Sigmoid colon (tissue), 7 donors: ENCODE measurements at regions of chr9 and their contacts with region 1.

Region 1: DNA sequence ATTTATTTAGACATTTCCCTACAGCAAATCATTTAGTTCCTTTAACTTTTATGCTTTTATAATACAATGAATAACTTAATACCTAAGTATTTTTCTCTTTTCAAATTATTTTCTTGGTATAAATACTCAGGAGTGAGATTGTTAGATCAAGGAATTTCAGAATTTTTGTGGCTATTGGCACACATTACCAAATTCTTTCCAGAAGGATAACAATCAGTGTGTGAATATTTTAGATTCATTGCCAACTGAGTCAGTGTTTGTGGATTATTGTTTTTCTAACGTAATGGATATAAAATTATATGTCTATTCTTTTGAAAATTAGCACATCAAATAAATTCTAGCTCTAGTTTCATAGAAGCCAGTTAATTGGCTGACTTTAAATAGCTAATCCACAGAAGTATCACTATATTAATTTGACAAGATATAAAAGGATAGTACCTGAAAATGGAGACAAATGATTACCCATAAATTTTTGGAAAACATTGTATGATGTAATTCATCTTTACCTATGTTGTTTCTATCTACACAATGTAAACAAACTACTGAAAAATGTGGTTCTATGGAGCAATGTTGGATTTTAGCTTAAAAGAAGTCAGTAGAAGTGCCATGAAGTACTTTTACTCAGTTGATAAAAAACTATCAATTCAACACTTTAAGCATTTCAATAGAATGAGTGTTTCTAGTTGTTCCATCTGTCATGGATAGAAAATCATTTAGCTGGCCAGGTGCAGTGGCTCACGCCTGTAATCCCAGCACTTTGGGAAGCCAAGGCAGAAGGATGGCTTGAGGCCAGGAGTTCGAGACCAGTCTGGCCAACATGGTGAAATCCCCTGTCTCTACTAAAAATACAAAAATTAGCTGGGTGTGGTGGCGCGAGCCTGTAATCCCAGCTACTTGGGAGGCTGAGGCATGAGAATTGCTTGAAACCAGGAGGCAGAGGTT is 185.1 kb downstream of the ADAMTSL1 start:
- DNase-seq: no peak
- H3K4me3 ChIP-seq: no peak overlapping the region
- H3K27ac ChIP-seq: no peak overlapping the region
- H3K4me1 ChIP-seq: no peaks in the 10 kb centered on the region
- H3K27me3 ChIP-seq: no peaks in the 10 kb centered on the region
- CTCF ChIP-seq: no peak
- EP300 ChIP-seq: no peak
- POLR2A ChIP-seq: no peak

Region 2: GRCh38 chr9:18768951-18769622 is 110.1 kb after region 1 on chr9:
- intact Hi-C with region 1: no loop called
- DNase-seq: no peak
- H3K4me3 ChIP-seq: no peak overlapping the region
- H3K27ac ChIP-seq: no peak overlapping the region
- H3K4me1 ChIP-seq: peaks cover 0 to 33% (median 27%) of the 10 kb centered on the region in 4 donors
- H3K27me3 ChIP-seq: no peaks in the 10 kb centered on the region
- CTCF ChIP-seq: no peak
- EP300 ChIP-seq: no peak
- POLR2A ChIP-seq: no peak

Region 3: GRCh38 chr9:18834740-18835361 is 175.8 kb after region 1 on chr9:
- intact Hi-C with region 1: loop called (anchors 10 kb)
- DNase-seq: no peak
- H3K4me3 ChIP-seq: no peak overlapping the region
- H3K27ac ChIP-seq: no peak overlapping the region
- H3K4me1 ChIP-seq: no peaks in the 10 kb centered on the region
- H3K27me3 ChIP-seq: no peaks in the 10 kb centered on the region
- CTCF ChIP-seq: no peak
- EP300 ChIP-seq: no peak
- POLR2A ChIP-seq: no peak